AG04449 (cell line): ENCODE measurements at regions of chr1 and their contacts with region 1.

Region 1: GRCh38 chr1:17001760-17002523 is 9.8 kb downstream of the ATP13A2 start:
- DNase-seq: no peak
- H3K4me3 ChIP-seq: no peak overlapping the region
- CTCF ChIP-seq: no peak

Region 2: GRCh38 chr1:16986596-16987361 is 15.2 kb before region 1 on chr1:
- CTCF ChIA-PET with region 1: interaction called, 10 read pairs
- POLR2A ChIA-PET with region 1: interaction called, 7 read pairs
- DNase-seq: no peak
- H3K4me3 ChIP-seq: no peak overlapping the region
- CTCF ChIP-seq: peak; percentile 52

Region 3: GRCh38 chr1:17018849-17019248 is 16.9 kb after region 1 on chr1:
- CTCF ChIA-PET with region 1: no interaction called
- POLR2A ChIA-PET with region 1: no interaction called
- DNase-seq: no peak
- H3K4me3 ChIP-seq: no peak overlapping the region
- CTCF ChIP-seq: no peak

Region 4: DNA sequence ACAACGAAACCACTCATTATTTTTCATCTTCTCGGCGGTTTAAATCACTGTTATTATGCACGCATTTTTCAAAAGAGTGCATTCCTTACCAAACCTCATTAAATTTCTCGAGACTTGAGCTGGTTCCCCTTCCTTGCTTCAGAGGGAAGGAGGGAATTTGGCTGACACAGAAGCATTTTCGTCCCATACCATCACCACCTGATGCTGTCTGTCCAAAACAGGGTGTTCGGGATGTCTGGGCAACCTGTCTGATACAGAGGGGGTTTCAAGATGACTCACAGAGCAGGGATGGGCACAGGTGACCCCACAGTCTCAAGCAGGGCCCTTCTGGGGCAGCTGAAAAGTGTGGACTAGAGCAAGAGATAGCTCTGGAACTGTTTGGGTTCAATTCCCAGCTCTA is 449.8 kb after region 1 on chr1:
- CTCF ChIA-PET with region 1: no interaction called
- POLR2A ChIA-PET with region 1: no interaction called
- DNase-seq: no peak
- H3K4me3 ChIP-seq: no peak overlapping the region
- CTCF ChIP-seq: no peak